GM23248 (cell line): ENCODE measurements at regions of chr17 and their contacts with region 1.

Region 1: DNA sequence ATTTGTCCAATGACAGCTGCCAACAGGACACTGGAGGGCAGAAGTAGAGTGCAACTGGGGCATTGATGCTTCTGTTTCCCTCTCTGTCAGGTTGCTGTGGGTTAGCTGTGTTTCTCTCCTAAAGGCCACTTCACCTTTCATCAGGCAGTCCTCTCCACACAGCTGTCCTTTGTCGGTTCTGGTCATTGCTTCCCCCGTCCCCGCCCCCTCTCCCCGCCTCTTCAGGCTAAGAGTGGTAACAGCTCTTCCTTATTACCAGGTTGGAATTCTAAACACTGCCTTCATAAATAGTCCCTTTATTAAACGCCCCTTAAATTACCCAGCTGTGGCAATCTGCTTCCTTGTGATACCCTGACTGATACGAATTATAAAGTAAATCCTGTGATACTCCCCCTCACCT is 31.8 kb upstream of the NSRP1 start:
- DNase-seq: no peak
- H3K4me3 ChIP-seq: no peak overlapping the region
- H3K27ac ChIP-seq: no peak overlapping the region
- H3K4me1 ChIP-seq: no peaks in the 10 kb centered on the region
- H3K27me3 ChIP-seq: 0 out of 2 replicates have a peak, but pooled peaks cover 16% of the 10 kb centered on the region

Region 2: GRCh38 chr17:29760761-29761696 is 323.8 kb before region 1 on chr17:
- in situ Hi-C with region 1: no loop called
- DNase-seq: peak; percentile 93
- H3K4me3 ChIP-seq: peak overlapping the region; percentile 85
- H3K27ac ChIP-seq: peak overlapping the region; percentile 65
- H3K4me1 ChIP-seq: 0 out of 2 replicates have a peak, but pooled peaks cover 6% of the 10 kb centered on the region
- H3K27me3 ChIP-seq: no peaks in the 10 kb centered on the region

Region 3: DNA sequence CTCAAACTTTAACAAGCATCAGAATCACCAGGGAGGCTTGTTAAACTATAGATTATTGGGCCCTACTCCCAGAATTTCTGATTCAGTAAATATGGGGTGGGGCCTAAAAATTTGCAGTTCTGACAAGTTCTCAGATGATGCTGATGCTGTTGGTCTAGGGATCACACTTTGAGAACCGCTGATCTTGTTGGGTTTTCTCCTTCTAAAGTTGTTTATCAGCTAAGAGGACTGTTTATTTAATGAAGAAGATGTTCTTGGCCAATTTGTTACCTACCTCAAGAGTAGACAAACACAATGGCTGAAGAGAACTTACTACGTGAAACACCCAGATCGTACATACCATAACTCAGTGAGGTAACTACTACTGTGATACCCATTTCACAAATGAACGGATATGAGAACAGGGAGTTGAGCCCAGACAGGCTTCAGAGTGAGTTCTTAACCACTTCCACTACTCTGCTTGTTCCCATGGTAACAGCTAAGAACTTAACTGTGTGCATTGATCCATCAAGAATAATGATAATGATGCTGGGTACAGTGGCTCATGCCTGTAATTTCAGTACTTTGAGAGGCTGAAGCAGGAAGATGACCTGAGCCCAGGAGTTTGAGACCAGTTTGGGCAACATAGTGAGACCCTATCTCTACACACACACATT is 53.4 kb before region 1 on chr17:
- in situ Hi-C with region 1: loop called (anchors 10 kb)
- DNase-seq: no peak
- H3K4me3 ChIP-seq: no peak overlapping the region
- H3K27ac ChIP-seq: no peak overlapping the region
- H3K4me1 ChIP-seq: no peaks in the 10 kb centered on the region
- H3K27me3 ChIP-seq: no peaks in the 10 kb centered on the region